Panc1 (cell line): ENCODE measurements at regions of chr7 and their contacts with region 1.

Region 1: GRCh38 chr7:138151731-138152577 is 75.7 kb downstream of the AKR1D1 start:
- DNase-seq: no peak
- ATAC-seq: no peak
- H3K4me3 ChIP-seq: no peak overlapping the region
- H3K27ac ChIP-seq: no peak overlapping the region
- H3K4me1 ChIP-seq: no peaks in the 10 kb centered on the region
- H3K27me3 ChIP-seq: no peaks in the 10 kb centered on the region
- CTCF ChIP-seq: no peak

Region 2: DNA sequence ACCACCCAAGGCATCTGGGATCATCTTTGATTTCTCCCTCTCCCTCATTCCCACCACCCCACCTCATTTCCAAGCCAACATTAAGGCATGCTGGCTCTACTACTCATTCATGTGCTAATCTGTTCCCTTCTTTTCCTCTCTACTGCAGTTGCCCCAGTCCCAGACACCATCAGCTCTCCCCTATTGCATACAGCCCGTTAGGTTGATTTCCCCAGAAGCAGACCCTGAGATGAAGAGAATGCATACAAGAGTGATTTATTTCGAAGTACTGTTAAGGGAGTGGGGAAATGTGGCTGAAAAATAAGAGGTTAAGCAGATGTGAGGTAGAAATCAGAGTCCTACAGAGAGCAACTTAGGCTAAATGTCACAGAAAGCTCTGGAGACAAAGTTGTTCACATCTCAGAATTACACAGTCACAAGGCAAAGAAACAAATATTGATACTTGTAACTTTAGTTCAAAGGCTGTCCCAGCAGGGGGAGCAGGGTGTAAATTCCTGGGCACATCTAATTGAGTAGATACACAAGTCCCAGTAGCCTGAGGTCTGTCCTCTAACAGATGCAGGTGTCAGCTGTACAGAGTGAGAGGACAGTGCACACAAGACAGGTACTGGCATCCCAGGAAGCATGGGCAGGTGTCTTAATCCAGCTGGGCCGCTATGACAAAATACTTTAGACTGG is 54.8 kb before region 1 on chr7:
- CTCF ChIA-PET with region 1: no interaction called
- POLR2A ChIA-PET with region 1: no interaction called
- in situ Hi-C with region 1: no loop called
- intact Hi-C with region 1: loop called (anchors 2 kb)
- DNase-seq: no peak
- ATAC-seq: 0 out of 2 replicates have a peak, but pooled peaks have one; percentile 66
- H3K4me3 ChIP-seq: no peak overlapping the region
- H3K27ac ChIP-seq: no peak overlapping the region
- H3K4me1 ChIP-seq: no peaks in the 10 kb centered on the region
- H3K27me3 ChIP-seq: no peaks in the 10 kb centered on the region
- CTCF ChIP-seq: peak; percentile 47

Region 3: DNA sequence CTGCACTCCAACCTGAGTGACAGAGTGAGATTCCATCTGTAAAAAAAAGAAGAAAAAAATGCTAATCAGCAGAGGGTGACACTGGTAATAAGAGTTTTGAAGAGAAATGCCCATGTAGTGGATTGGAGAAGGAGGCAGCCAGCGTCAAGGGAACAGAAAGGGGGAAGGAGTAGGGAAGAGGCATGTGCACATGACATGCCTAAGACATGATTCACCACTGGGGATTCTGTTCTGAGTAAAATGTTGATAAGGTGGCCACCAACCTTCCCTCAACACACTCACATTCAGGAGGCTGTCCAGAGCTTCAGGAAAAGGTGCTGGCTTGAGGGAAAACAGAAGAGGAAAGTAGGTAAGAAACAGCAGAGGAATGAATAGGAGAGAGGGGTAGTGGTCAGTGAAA is 35.8 kb before region 1 on chr7:
- CTCF ChIA-PET with region 1: no interaction called
- POLR2A ChIA-PET with region 1: no interaction called
- in situ Hi-C with region 1: no loop called
- intact Hi-C with region 1: no loop called
- DNase-seq: no peak
- ATAC-seq: 0 out of 2 replicates have a peak, but pooled peaks have one; percentile 51
- H3K4me3 ChIP-seq: no peak overlapping the region
- H3K27ac ChIP-seq: no peak overlapping the region
- H3K4me1 ChIP-seq: no peaks in the 10 kb centered on the region
- H3K27me3 ChIP-seq: no peaks in the 10 kb centered on the region
- CTCF ChIP-seq: no peak

Region 4: DNA sequence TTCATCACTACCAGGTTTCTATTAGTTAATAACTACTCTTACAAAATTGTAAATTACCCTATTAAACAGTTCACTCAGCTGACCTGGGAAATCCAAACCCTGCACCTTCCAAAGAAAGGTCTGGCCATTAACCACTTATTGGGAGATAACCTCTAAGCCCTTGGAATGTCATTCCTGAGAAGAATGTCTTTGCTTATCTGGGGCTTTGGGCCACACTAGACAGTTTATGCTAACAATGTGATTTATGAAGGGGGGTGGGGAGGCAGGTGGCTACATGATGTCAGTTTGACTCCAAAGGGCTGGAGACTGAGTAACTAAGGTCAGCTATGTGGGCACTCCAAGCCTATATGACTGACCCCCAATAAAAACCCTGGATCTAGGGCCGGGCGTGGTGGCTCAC is 25.0 kb before region 1 on chr7:
- CTCF ChIA-PET with region 1: no interaction called
- POLR2A ChIA-PET with region 1: no interaction called
- in situ Hi-C with region 1: no loop called
- intact Hi-C with region 1: no loop called
- DNase-seq: no peak
- ATAC-seq: no peak
- H3K4me3 ChIP-seq: no peak overlapping the region
- H3K27ac ChIP-seq: no peak overlapping the region
- H3K4me1 ChIP-seq: no peaks in the 10 kb centered on the region
- H3K27me3 ChIP-seq: no peaks in the 10 kb centered on the region
- CTCF ChIP-seq: no peak

Region 5: GRCh38 chr7:138359906-138360582 is 208.1 kb after region 1 on chr7:
- CTCF ChIA-PET with region 1: no interaction called
- POLR2A ChIA-PET with region 1: no interaction called
- in situ Hi-C with region 1: no loop called
- intact Hi-C with region 1: no loop called
- DNase-seq: no peak
- ATAC-seq: no peak
- H3K4me3 ChIP-seq: no peak overlapping the region
- H3K27ac ChIP-seq: no peak overlapping the region
- H3K4me1 ChIP-seq: no peaks in the 10 kb centered on the region
- H3K27me3 ChIP-seq: no peaks in the 10 kb centered on the region
- CTCF ChIP-seq: no peak